IMR-90 (cell line): ENCODE measurements at regions of chrX and their contacts with region 1.

Region 1: DNA sequence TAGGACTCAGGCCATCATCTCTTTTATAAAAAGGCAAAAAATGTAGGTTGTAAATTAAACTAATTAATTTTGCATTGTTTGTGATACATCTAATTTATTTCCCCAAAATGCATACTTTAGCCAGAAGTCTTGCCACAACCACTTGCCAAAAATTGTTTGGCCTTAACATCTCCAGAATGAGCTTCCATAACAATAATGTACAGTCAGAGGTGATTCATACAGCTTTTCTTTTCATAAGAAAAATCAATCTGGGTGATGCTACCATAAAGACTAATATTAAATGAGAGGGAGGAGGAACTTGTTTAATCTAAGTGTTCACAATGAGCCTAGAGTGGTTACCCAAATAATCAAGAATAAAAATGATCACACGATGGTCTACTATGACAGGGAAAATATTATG is 59.3 kb downstream of the AMMECR1 start:
- DNase-seq: peak; percentile 68
- ATAC-seq: peak; percentile 48
- H3K4me3 ChIP-seq: no peak overlapping the region
- H3K27ac ChIP-seq: no peak overlapping the region
- H3K4me1 ChIP-seq: no peaks in the 10 kb centered on the region
- H3K27me3 ChIP-seq: no peaks in the 10 kb centered on the region
- CTCF ChIP-seq: no peak
- POLR2A ChIP-seq: no peak
- RAD21 ChIP-seq: no peak

Region 2: GRCh38 chrX:110219920-110220319 is 38.6 kb before region 1 on chrX:
- CTCF ChIA-PET with region 1: no interaction called
- POLR2A ChIA-PET with region 1: no interaction called
- dilution Hi-C with region 1: no loop called
- in situ Hi-C with region 1: no loop called
- intact Hi-C with region 1: loop called (anchors 1 kb)
- DNase-seq: peak; percentile 69
- ATAC-seq: peak; percentile 53; the same call in 1 of the 2 replicates
- H3K4me3 ChIP-seq: no peak overlapping the region
- H3K27ac ChIP-seq: no peak overlapping the region
- H3K4me1 ChIP-seq: no peaks in the 10 kb centered on the region
- H3K27me3 ChIP-seq: no peaks in the 10 kb centered on the region
- CTCF ChIP-seq: no peak
- POLR2A ChIP-seq: no peak
- RAD21 ChIP-seq: no peak